Activated CD4-positive, alpha-beta T cell treated with anti-CD3 and anti-CD28 coated beads, Interleukin-2, amount 10 ng/mL, durations not matched to agents 24 days and 14 days (primary cell): ENCODE measurements at regions of chr17 and their contacts with region 1.

Region 1: GRCh38 chr17:37609170-37610040 is at the start of gene SYNRG:
- DNase-seq: peak; percentile 98
- H3K4me3 Mint-ChIP-seq: peak within 1 kb of the TSS; percentile 92
- H3K27ac Mint-ChIP-seq: peak within 1 kb of the TSS; percentile 92
- H3K4me1 Mint-ChIP-seq: peaks cover 33% of the 10 kb centered on the region
- H3K27me3 Mint-ChIP-seq: no peaks in the 10 kb centered on the region
- total RNA-seq, gene SYNRG: 44.1 and 45.3 TPM in 2 replicates

Region 2: GRCh38 chr17:37406635-37407461 is 202.6 kb before region 1 on chr17 and contains the starts of genes ACACA and TADA2A:
- intact Hi-C with region 1: loop called (anchors 5 kb)
- DNase-seq: peak; percentile 94
- H3K4me3 Mint-ChIP-seq: peak within 1 kb of the TSS; percentile 98
- H3K27ac Mint-ChIP-seq: peak within 1 kb of the TSS; percentile 98
- H3K4me1 Mint-ChIP-seq: peaks cover 50% of the 10 kb centered on the region
- H3K27me3 Mint-ChIP-seq: no peaks in the 10 kb centered on the region
- total RNA-seq, gene ACACA: 120 and 122 TPM in 2 replicates
- total RNA-seq, gene TADA2A: 43.2 and 46.7 TPM in 2 replicates

Region 3: GRCh38 chr17:37489197-37490001 is 120.0 kb before region 1 on chr17 and contains the start of gene DUSP14:
- intact Hi-C with region 1: loop called (anchors 2 kb)
- DNase-seq: peak; percentile 95
- H3K4me3 Mint-ChIP-seq: peak within 1 kb of the TSS; percentile 92
- H3K27ac Mint-ChIP-seq: peak within 1 kb of the TSS; percentile 97
- H3K4me1 Mint-ChIP-seq: peaks cover 39% of the 10 kb centered on the region
- H3K27me3 Mint-ChIP-seq: no peaks in the 10 kb centered on the region
- total RNA-seq, gene DUSP14: 18.7 and 20.2 TPM in 2 replicates

Region 4: GRCh38 chr17:37643118-37643766 is 33.8 kb after region 1 on chr17 and contains the start of gene DDX52:
- intact Hi-C with region 1: loop called (anchors 2 kb)
- DNase-seq: peak; percentile 96
- H3K4me3 Mint-ChIP-seq: peak within 1 kb of the TSS; percentile 94
- H3K27ac Mint-ChIP-seq: peak within 1 kb of the TSS; percentile 92
- H3K4me1 Mint-ChIP-seq: peaks cover 25% of the 10 kb centered on the region
- H3K27me3 Mint-ChIP-seq: peaks cover 41% of the 10 kb centered on the region
- total RNA-seq, gene DDX52: 46.6 and 50.0 TPM in 2 replicates

Region 5: DNA sequence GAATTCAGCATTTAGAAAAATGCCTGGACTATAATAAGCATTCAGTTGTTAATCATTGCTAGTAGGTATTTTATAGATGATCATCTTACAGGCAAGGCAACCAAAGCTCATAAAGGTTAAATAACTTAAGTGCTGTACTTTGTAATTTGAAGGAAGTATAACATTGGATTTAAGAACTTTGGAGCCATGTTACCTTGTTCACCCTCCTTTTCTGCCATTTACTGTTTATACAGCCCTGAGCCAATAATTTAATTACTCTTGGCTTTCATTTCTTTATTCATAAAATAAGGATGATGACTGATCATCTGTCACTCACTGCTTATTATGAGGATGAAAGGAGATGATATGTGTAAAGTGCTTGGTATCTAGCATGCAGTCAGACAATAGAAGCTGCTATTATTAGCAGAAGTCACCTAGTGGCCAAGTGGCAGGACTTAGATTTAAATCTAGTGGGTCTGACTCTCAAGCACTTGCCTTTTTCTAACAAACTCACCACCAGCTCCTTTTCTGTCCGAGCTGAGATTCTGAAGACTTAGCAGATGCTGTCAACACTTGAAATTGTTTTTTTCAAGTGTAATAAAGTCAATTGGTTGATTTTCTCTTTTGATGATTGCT is 52.1 kb after region 1 on chr17:
- intact Hi-C with region 1: no loop called
- DNase-seq: no peak
- H3K4me3 Mint-ChIP-seq: no peak overlapping the region
- H3K27ac Mint-ChIP-seq: no peak overlapping the region
- H3K4me1 Mint-ChIP-seq: no peaks in the 10 kb centered on the region
- H3K27me3 Mint-ChIP-seq: peaks cover 26% of the 10 kb centered on the region

Region 6: GRCh38 chr17:37701496-37701898 is 92.1 kb after region 1 on chr17:
- intact Hi-C with region 1: no loop called
- DNase-seq: peak; percentile 87
- H3K4me3 Mint-ChIP-seq: peak overlapping the region; percentile 32
- H3K27ac Mint-ChIP-seq: peak overlapping the region; percentile 18
- H3K4me1 Mint-ChIP-seq: peaks cover 33% of the 10 kb centered on the region
- H3K27me3 Mint-ChIP-seq: peaks cover 27% of the 10 kb centered on the region

Region 7: DNA sequence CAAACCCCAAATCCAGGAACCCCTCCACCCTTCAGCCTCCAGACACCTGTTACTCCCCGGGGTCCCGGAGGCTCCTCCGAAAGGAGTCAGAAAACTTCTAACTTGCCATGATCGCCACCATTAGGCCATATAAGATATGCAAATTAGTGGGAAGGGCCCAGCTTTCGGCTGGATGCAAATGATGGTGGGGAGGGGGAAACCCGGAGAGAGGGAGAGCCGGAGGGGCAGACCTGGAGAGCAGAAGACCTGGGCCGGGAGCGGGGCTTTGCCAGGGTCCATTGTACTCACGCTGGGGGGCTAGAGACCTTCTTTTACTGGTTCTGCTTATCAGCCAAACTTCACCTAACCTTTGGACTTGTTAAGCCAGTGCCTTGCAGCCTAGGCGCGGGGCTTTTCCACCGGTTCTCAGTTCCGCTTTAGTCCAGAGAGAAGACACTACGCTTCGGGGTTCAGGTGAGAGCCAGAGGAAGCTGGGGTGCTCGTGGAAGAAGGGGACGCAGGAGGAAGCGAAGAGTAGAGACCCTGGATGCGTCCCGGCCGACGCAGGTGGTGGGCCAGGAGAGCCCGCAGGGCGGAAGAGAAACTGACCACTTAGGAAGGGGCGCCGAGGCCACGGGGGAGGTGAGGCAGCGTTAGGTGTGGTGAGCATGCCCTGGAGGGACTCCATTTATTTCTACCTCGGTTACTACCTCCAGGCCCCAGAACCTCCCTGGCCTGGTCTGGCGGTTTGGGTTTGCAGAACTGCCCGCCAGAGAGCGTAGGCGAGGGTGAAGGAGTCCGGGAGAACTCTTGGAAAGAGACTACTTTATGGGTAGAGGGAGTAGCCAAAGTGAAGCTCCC is 135.8 kb after region 1 on chr17 and contains the start of gene HNF1B:
- intact Hi-C with region 1: no loop called
- DNase-seq: peak; percentile 71
- H3K4me3 Mint-ChIP-seq: peak within 1 kb of the TSS; percentile 81
- H3K27ac Mint-ChIP-seq: peak within 1 kb of the TSS; percentile 53
- H3K4me1 Mint-ChIP-seq: peaks cover 13% of the 10 kb centered on the region
- H3K27me3 Mint-ChIP-seq: peaks cover 70% of the 10 kb centered on the region
- total RNA-seq, gene HNF1B: 2.2 and 2.9 TPM in 2 replicates

Region 8: DNA sequence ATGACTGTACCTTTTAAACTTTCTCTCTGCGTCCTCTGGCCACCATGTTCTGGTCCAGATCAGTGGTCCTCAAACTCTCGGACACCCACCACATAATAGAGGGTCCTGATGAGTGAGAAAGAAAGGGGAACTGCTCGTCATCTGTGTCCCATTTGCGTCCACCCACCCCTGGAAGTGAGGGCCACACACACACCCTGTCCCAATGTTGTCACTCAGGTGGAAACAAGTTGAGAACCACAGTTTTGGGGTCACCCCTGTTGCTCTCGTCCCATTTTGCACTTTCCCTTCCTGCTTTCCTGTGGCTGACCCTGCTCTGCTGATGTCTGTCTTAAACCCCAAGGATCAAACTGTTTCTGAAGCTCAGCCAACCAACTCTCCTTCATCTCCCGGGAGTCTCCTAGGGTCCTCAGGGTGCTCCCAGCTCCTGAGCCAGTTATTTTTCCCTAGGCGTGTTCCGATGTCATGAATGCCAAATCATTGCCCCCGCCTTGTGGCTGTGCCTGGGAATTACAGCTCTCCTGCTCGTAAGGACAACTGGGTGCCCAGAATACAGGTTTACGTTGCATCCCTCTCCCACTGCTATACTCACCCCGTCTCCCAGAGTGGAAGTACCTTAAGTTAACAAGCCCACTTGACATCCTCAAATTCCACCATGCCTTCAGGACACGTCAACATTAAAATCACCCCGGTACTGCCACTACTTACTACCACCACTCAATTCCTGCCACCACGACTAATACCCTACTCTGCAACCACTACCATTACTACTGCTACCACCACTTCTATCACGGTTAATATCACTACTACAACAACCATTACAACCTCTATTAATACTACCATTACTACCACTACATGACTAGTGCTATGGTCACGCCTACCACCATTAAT is 161.5 kb after region 1 on chr17:
- intact Hi-C with region 1: loop called (anchors 10 kb)
- DNase-seq: peak; percentile 81
- H3K4me3 Mint-ChIP-seq: no peak overlapping the region
- H3K27ac Mint-ChIP-seq: peak overlapping the region; percentile 21
- H3K4me1 Mint-ChIP-seq: peaks cover 51% of the 10 kb centered on the region
- H3K27me3 Mint-ChIP-seq: peaks cover 18% of the 10 kb centered on the region

Region 9: DNA sequence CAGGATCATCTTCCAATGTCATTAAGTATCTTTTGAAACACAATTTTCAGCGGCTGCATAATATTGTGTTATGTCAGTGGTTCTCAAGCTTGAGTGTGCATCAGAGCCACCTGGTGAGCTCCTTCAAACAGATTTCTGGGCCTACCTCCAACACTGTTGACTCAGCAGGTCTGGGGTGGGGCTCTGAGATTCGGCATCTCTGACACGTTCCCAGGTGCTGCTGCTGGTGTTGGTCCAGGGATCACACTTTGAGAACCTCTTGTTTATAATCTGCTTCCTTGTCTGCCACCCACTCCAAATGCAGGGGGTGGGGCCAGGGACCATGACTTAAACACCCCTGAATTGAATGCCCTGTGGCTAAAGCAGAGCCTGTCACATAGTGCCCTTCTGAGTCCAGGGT is 209.3 kb after region 1 on chr17:
- intact Hi-C with region 1: loop called (anchors 5 kb)
- DNase-seq: no peak
- H3K4me3 Mint-ChIP-seq: no peak overlapping the region
- H3K27ac Mint-ChIP-seq: no peak overlapping the region
- H3K4me1 Mint-ChIP-seq: peaks cover 16% of the 10 kb centered on the region
- H3K27me3 Mint-ChIP-seq: peaks cover 20% of the 10 kb centered on the region